ENCODE measurements at regions of chr6 and their contacts with region 1.

Region 1: DNA sequence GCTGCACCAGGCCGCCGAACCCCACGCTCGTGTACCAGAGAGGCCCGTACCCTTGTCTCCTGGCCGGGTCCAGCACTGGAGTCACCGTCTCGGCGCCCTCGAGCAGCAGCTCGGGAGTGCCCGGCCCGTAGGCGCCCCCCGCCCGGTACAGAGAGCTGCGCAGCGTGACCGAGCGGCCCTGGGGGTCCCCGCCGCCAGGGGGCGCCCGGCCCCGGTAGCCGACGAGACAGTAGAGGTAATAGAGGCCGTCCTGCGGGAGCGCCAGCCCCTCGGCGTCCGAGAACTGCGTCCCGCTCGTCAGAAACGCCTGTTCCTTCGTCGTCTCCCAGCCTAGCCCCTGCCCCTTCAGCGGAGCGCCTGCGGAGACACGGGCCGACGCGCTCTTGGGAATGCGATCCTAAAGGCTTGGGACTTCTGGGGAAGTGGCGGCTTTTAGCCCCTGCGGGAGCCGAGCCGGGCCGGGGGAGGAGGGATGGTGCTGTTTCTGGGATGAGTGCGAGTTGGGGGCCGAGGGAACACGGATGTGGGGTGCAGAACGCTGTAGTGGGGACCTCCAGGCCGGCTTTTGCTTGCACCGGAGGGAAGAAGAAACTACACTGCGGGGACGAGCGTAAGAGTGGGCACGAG is 1.3 kb downstream of the LTB start:
- DNase-seq: peak; percentile 97
- ATAC-seq: peak; percentile 74
- H3K4me3 Mint-ChIP-seq: peak overlapping the region; percentile 97
- H3K27ac Mint-ChIP-seq: peak overlapping the region; percentile 99
- H3K4me1 Mint-ChIP-seq: peaks cover 67% of the 10 kb centered on the region
- H3K27me3 Mint-ChIP-seq: no peaks in the 10 kb centered on the region

Region 2: DNA sequence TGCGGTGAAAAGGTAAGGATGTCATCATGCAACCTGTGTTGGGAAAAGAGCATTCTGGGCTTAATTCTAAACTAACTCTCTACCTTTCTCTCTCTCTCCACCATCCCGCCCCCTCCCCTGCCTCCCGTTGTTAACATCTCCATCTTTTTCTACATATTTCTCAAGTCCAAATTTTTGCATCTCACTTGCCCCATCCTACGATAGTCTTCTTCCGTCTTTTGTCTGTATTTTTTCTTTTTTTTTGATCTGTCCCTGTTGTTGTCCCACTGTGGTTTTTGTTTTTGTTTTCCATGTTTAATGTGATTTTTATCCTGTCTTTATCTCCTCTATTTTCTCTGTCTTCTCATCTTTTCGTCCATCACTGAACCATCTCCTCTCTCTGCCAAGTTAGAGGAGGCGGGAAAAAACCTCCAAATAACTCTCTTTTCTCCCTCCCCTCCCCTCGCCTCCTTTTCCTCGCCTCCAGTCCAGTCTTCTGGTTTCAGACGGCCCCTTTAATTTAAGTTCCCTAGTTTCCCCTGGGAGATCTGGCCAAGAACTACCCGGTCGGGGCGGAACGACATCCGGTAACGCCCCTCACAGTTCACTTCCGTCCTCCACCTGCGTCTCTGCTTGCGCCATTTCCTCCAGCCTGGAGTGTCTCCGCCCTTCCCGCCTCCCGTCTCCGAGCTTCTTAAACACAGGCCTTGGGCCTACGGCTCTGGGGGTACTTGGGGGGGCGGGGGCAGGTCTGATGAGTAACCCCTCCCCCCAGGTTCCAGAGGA is 33.8 kb before region 1 on chr6 and contains the start of gene NFKBIL1:
- POLR2A ChIA-PET with region 1: interaction called, 27 read pairs
- DNase-seq: peak; percentile 83
- ATAC-seq: peak; percentile 81
- H3K4me3 Mint-ChIP-seq: peak within 1 kb of the TSS; percentile 88
- H3K27ac Mint-ChIP-seq: peak within 1 kb of the TSS; percentile 71
- H3K4me1 Mint-ChIP-seq: peaks cover 32% of the 10 kb centered on the region
- H3K27me3 Mint-ChIP-seq: no peaks in the 10 kb centered on the region
- total RNA-seq, gene NFKBIL1: 15.4 to 17.6 TPM

Region 3: GRCh38 chr6:31559958-31560696 is 20.8 kb before region 1 on chr6:
- POLR2A ChIA-PET with region 1: interaction called, 101 read pairs
- DNase-seq: no peak
- ATAC-seq: peak; percentile 78
- H3K4me3 Mint-ChIP-seq: peak overlapping the region; percentile 76
- H3K27ac Mint-ChIP-seq: peak overlapping the region; percentile 70
- H3K4me1 Mint-ChIP-seq: peaks cover 55% of the 10 kb centered on the region
- H3K27me3 Mint-ChIP-seq: peaks cover 31% of the 10 kb centered on the region

Region 4: GRCh38 chr6:31568537-31568961 is 12.4 kb before region 1 on chr6:
- POLR2A ChIA-PET with region 1: interaction called, 481 read pairs
- DNase-seq: no peak
- ATAC-seq: peak; percentile 65
- H3K4me3 Mint-ChIP-seq: peak overlapping the region; percentile 41
- H3K27ac Mint-ChIP-seq: peak overlapping the region; percentile 64
- H3K4me1 Mint-ChIP-seq: peaks cover 57% of the 10 kb centered on the region
- H3K27me3 Mint-ChIP-seq: peaks cover 36% of the 10 kb centered on the region

Region 5: DNA sequence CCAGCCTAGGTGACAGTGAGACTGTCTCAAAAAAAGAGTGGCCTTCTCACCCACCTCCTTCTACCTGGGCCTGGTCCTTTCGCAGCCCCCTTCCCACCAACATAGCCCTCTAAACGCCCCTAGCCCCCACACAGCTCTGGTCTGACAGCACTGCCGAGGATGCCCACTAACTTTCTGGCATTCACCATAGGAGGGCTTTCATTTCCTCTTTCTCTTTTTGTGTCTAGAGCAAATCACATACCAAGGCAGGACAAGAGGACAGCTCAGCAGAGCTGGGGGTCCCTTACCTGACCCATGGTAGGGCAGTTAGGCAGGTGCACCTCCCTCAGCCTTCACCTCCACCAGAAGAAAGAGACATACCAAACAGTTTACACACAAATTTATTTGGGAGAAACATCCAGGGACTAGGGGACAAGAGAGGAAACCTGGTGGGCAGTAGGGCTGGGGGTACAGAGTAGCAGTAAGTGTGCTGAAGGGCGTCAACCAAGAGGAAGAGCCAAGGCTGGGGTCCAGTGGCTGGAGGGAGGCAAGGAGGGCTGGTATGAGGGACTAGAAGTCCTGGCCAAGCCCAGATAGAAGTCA is 95.5 kb after region 1 on chr6:
- POLR2A ChIA-PET with region 1: no interaction called
- DNase-seq: no peak
- ATAC-seq: no peak
- H3K4me3 Mint-ChIP-seq: no peak overlapping the region
- H3K27ac Mint-ChIP-seq: peak overlapping the region; percentile 6
- H3K4me1 Mint-ChIP-seq: peaks cover 28% of the 10 kb centered on the region
- H3K27me3 Mint-ChIP-seq: no peaks in the 10 kb centered on the region